ENCODE measurements at regions of chr1 and their contacts with region 1.

Region 1: GRCh38 chr1:66924756-66925557 is at the starts of genes DNAI4 and MIER1:
- DNase-seq: peak; percentile 95
- ATAC-seq: peak; percentile 94
- H3K4me3 Mint-ChIP-seq: peak within 1 kb of the TSS; percentile 93
- H3K27ac Mint-ChIP-seq: peak within 1 kb of the TSS; percentile 95
- H3K4me1 Mint-ChIP-seq: peaks cover 30% of the 10 kb centered on the region
- H3K27me3 Mint-ChIP-seq: no peaks in the 10 kb centered on the region
- CTCF ChIP-seq: no peak
- total RNA-seq, gene DNAI4: 0.75 and 3.4 TPM in 2 replicates
- total RNA-seq, gene MIER1: 39.1 and 39.2 TPM in 2 replicates

Region 2: GRCh38 chr1:65067491-65068201 is 1857.3 kb before region 1 on chr1:
- CTCF ChIA-PET with region 1: no interaction called
- POLR2A ChIA-PET with region 1: no interaction called
- intact Hi-C with region 1: loop called (anchors 5 kb)
- DNase-seq: peak; percentile 50
- ATAC-seq: peak; percentile 15
- H3K4me3 Mint-ChIP-seq: peak overlapping the region; percentile 97
- H3K27ac Mint-ChIP-seq: peak overlapping the region; percentile 99
- H3K4me1 Mint-ChIP-seq: peaks cover 48% of the 10 kb centered on the region
- H3K27me3 Mint-ChIP-seq: no peaks in the 10 kb centered on the region
- CTCF ChIP-seq: no peak

Region 3: GRCh38 chr1:66374561-66375111 is 550.3 kb before region 1 on chr1:
- CTCF ChIA-PET with region 1: no interaction called
- POLR2A ChIA-PET with region 1: no interaction called
- intact Hi-C with region 1: loop called (anchors 10 kb)
- DNase-seq: no peak
- ATAC-seq: peak; percentile 79
- H3K4me3 Mint-ChIP-seq: peak overlapping the region; percentile 39
- H3K27ac Mint-ChIP-seq: peak overlapping the region; percentile 93
- H3K4me1 Mint-ChIP-seq: peaks cover 94% of the 10 kb centered on the region
- H3K27me3 Mint-ChIP-seq: no peaks in the 10 kb centered on the region
- CTCF ChIP-seq: no peak

Region 4: DNA sequence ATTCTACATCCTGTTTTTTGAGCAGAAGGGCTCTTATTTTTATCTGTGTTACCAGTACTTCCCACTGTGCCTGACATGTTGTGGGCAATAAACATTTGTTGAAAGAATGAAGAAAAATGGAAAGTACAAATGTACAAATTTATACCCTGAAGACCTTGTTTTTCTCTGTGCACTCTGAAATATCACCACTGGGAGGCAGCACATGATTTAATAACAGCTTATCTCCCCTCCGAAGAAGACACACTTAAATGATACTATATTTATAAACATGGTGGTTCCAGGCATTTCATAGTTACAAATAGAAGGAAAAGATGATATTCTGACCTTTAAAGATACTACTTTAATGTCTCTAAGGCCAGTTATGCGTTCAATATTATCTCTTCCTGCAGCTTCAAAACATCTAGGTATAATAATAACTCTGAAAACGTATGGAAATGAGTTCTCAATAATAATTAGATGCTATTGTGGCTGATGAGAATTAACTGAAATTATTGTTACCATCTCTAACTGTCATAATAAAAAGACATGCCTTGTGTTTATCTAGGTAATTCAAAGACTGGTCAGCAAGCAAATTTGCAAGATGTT is 159.9 kb before region 1 on chr1:
- CTCF ChIA-PET with region 1: interaction called, 4 read pairs
- POLR2A ChIA-PET with region 1: no interaction called
- intact Hi-C with region 1: loop called (anchors 1 kb)
- DNase-seq: no peak
- ATAC-seq: peak; percentile 25
- H3K4me3 Mint-ChIP-seq: no peak overlapping the region
- H3K27ac Mint-ChIP-seq: no peak overlapping the region
- H3K4me1 Mint-ChIP-seq: no peaks in the 10 kb centered on the region
- H3K27me3 Mint-ChIP-seq: no peaks in the 10 kb centered on the region
- CTCF ChIP-seq: no peak

Region 5: DNA sequence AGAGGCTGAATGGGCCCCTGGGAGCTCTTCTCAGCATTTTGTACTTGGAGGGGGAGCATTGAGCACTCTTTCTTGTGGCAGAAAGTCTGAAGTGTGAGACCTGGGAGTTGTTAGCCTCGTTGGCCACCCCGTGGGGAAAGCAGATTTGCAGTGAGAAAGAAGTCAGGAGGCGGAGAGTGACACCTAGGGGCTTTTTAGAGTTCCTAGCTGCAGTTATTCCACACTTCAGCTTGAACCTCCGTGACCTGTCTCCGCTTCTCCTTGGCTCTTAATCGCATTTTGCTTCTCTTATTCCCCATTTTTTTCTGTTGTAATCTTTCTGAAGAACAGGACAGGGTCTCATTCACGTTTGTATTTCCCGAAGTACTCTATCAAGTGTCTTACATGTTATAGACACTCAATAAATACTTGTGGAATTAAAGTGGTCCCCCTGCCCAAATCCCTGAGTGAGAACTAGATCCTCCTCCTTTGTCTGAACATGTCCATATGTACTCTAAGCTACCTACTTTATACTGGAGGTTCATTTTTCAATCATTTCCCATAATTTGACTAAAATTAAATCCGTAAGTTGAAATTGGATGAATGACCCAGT is 224.3 kb after region 1 on chr1:
- CTCF ChIA-PET with region 1: interaction called, 3 read pairs
- POLR2A ChIA-PET with region 1: no interaction called
- intact Hi-C with region 1: loop called (anchors 2 kb)
- DNase-seq: peak; percentile 23
- ATAC-seq: peak; percentile 87
- H3K4me3 Mint-ChIP-seq: no peak overlapping the region
- H3K27ac Mint-ChIP-seq: no peak overlapping the region
- H3K4me1 Mint-ChIP-seq: peaks cover 9% of the 10 kb centered on the region
- H3K27me3 Mint-ChIP-seq: peaks cover 8% of the 10 kb centered on the region
- CTCF ChIP-seq: no peak

Region 6: GRCh38 chr1:67441183-67441582 is 516.2 kb after region 1 on chr1:
- CTCF ChIA-PET with region 1: no interaction called
- POLR2A ChIA-PET with region 1: no interaction called
- intact Hi-C with region 1: no loop called
- DNase-seq: no peak
- ATAC-seq: no peak
- H3K4me3 Mint-ChIP-seq: no peak overlapping the region
- H3K27ac Mint-ChIP-seq: no peak overlapping the region
- H3K4me1 Mint-ChIP-seq: no peaks in the 10 kb centered on the region
- H3K27me3 Mint-ChIP-seq: no peaks in the 10 kb centered on the region
- CTCF ChIP-seq: no peak

Region 7: DNA sequence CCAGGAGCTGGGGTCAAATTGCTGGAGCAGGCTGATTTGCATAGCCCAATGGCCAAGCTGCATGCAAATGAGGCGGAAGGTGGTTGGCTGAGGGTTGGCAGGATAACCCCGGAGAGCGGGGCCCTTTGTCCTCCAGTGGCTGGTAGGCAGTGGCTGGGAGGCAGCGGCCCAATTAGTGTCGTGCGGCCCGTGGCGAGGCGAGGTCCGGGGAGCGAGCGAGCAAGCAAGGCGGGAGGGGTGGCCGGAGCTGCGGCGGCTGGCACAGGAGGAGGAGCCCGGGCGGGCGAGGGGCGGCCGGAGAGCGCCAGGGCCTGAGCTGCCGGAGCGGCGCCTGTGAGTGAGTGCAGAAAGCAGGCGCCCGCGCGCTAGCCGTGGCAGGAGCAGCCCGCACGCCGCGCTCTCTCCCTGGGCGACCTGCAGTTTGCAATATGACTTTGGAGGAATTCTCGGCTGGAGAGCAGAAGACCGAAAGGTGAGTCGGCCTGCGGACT is 760.2 kb after region 1 on chr1 and contains the start of gene GADD45A:
- CTCF ChIA-PET with region 1: no interaction called
- POLR2A ChIA-PET with region 1: no interaction called
- intact Hi-C with region 1: loop called (anchors 1 kb)
- DNase-seq: peak; percentile 81
- ATAC-seq: peak; percentile 87
- H3K4me3 Mint-ChIP-seq: peak within 1 kb of the TSS; percentile 95
- H3K27ac Mint-ChIP-seq: peak within 1 kb of the TSS; percentile 81
- H3K4me1 Mint-ChIP-seq: peaks cover 38% of the 10 kb centered on the region
- H3K27me3 Mint-ChIP-seq: no peaks in the 10 kb centered on the region
- CTCF ChIP-seq: no peak
- total RNA-seq, gene GADD45A: 8.3 and 8.7 TPM in 2 replicates

Measured in activated B cell treated with CpG ODN at 0.5 μM for 24 hours (primary cell).